ENCODE measurements at regions of chr15 and their contacts with region 1.

Region 1: GRCh38 chr15:65818927-65819562 is 27.0 kb upstream of the DENND4A start:
- DNase-seq: peak; percentile 25
- H3K4me3 Mint-ChIP-seq: peak overlapping the region; percentile 31
- H3K27ac Mint-ChIP-seq: peak overlapping the region; percentile 91
- H3K4me1 Mint-ChIP-seq: peaks cover 57% of the 10 kb centered on the region
- H3K27me3 Mint-ChIP-seq: no peaks in the 10 kb centered on the region

Region 2: DNA sequence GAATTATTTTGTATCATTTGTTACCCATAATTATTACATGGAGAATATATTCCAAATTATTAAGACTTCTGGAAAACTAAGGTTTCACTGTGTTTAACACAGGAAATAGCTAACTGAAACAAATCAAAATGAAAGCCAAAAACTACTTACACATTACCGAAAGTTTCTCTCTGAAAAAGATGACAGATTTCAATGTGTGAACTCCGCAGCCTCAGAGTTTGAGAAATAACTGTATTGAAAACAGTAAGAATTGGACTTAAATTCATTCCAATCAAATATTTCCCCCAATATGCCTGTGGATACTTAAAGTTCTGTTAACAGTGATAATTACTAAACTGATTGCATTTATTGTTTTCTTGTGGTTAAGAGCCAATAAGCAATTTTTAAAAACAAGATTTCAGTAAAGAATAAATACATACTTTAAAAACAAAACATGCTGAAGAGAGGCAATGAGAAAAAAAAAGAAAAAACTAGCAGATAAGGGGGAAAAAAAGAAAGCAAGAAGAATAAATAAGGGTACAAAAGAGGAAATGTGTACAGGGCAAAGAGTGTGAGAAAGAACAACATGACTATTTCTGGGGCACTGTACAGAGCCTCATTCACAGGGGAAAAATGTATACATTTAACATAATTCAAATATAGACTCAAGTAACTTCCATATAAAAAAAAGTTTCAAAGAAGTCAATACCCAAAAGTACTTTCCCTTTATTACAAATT is 57.7 kb before region 1 on chr15:
- intact Hi-C with region 1: loop called (anchors 1 kb)
- DNase-seq: no peak
- H3K4me3 Mint-ChIP-seq: peak overlapping the region; percentile 57
- H3K27ac Mint-ChIP-seq: peak overlapping the region; percentile 85
- H3K4me1 Mint-ChIP-seq: peaks cover 31% of the 10 kb centered on the region
- H3K27me3 Mint-ChIP-seq: no peaks in the 10 kb centered on the region

Region 3: GRCh38 chr15:65805019-65805745 is 13.9 kb before region 1 on chr15:
- intact Hi-C with region 1: loop called (anchors 1 kb)
- DNase-seq: no peak
- H3K4me3 Mint-ChIP-seq: peak overlapping the region; percentile 31
- H3K27ac Mint-ChIP-seq: peak overlapping the region; percentile 74
- H3K4me1 Mint-ChIP-seq: peaks cover 40% of the 10 kb centered on the region
- H3K27me3 Mint-ChIP-seq: no peaks in the 10 kb centered on the region

Region 4: DNA sequence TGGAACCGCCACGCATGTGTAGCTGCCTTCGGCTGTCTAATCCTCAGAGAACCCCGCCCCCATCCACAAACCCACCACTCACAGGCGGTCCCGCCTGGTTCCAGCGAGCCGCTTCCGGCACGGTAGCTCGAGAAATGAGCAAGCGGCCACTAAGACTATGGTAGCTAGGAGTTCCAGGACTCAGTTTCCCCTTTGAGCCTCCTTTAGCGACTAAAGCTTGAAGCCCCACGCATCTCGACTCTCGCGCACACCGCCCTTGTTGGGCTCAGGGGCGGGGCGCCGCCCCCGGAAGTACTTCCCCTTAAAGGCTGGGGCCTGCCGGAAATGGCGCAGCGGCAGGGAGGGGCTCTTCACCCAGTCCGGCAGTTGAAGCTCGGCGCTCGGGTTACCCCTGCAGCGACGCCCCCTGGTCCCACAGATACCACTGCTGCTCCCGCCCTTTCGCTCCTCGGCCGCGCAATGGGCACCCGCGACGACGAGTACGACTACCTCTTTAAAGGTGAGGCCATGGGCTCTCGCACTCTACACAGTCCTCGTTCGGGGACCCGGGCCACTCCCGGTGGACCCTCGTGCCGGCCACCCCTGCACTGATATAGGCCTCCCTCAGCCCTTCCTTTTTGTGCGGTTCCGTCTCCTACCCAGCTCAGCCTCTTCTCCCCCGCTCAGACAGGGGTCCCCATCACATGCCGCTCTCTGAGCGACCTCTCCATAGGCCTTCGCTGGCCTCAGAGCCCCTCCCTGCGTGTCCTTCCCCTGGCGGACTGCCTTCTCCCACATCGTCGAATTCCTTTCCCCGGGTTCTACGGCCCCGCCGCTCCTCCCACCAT is 50.3 kb after region 1 on chr15 and contains the start of gene RAB11A:
- intact Hi-C with region 1: loop called (anchors 1 kb)
- DNase-seq: peak; percentile 94
- H3K4me3 Mint-ChIP-seq: peak within 1 kb of the TSS; percentile 99
- H3K27ac Mint-ChIP-seq: peak within 1 kb of the TSS; percentile 93
- H3K4me1 Mint-ChIP-seq: peaks cover 31% of the 10 kb centered on the region
- H3K27me3 Mint-ChIP-seq: peaks cover 4% of the 10 kb centered on the region
- total RNA-seq, gene RAB11A: 161 and 171 TPM in 2 replicates

Region 5: GRCh38 chr15:65916664-65917406 is 97.8 kb after region 1 on chr15:
- intact Hi-C with region 1: loop called (anchors 2 kb)
- DNase-seq: peak; percentile 71
- H3K4me3 Mint-ChIP-seq: peak overlapping the region; percentile 37
- H3K27ac Mint-ChIP-seq: peak overlapping the region; percentile 83
- H3K4me1 Mint-ChIP-seq: peaks cover 55% of the 10 kb centered on the region
- H3K27me3 Mint-ChIP-seq: no peaks in the 10 kb centered on the region

Region 6: DNA sequence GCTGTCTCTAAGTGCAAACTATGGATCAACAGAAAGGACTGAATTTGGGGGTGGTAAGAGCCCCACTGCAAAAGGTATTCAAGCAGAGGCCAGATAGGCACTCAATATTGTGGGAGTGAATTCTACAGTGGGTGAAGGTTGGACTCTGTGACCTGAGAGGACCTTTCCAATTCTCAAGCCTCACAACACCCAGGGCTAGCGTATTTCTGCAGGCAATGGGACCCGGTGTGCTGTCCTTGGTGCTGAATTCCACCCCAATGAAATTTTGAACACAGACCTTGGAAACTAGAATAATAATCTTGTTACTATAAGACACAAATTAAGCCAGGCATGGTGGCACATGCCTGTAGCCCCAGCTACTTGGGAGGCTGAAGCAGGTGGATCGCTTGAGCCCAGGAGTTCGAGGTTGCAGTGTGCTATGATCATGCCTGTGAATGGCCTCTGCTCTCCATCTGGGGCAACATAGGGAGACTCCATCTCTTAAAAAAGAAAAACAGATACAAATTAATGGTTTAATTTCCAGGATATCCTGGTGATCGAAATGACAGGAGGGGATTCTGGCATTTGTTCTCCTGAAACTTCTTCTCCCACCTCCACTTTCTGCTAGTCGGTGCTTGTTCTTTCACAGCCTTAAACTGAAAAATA is 185.7 kb after region 1 on chr15:
- intact Hi-C with region 1: no loop called
- DNase-seq: peak; percentile 12
- H3K4me3 Mint-ChIP-seq: no peak overlapping the region
- H3K27ac Mint-ChIP-seq: no peak overlapping the region
- H3K4me1 Mint-ChIP-seq: no peaks in the 10 kb centered on the region
- H3K27me3 Mint-ChIP-seq: peaks cover 17% of the 10 kb centered on the region

Measured in activated T-helper 1 cell treated with anti-CD3 and anti-CD28 coated beads, Interleukin-12 subunit alpha, Interleukin-12 subunit beta, Interleukin-2, Interleukin-4 antibody, amounts not matched to agents 30 ng/mL and 10 ng/mL and 1 ng/mL, durations not matched to agents 14 hours and 24 hours and 36 hours (primary cell).